ENCODE measurements at regions of chr3 and their contacts with region 1.

Region 1: GRCh38 chr3:56453011-56453410 is 15.3 kb downstream of the ERC2 start:
- DNase-seq: no peak

Region 2: DNA sequence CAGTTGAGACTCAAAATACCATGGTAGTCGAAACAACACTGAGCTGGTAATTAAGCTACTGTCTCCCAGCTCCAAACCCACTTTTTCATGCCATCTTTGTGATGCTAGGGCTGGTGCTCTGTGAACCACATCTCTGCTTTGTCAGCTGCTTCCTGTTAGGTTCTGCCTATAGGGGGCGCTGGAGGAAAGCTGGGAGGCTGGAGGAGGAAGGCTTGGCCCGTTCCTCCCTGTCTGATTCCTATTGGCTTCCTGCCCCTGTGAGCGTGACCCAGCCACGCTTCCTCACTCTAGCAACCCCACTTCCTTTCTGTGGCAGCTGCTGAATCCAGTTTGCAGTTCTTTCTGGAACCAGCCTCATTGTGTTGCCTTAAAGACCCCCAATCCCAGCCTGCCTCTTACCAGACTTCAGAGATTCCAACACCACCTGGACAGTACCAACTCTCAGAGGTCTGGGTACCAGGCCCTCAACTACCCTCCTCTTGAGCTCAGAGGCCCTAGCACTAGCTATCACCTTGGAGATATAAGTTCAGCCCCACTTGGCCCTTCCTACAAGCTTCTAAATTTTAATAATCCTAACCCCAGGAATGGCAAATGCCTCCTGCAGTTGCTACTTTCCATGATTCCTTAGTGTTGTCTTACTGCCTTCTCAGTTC is 105.7 kb before region 1 on chr3:
- intact Hi-C with region 1: loop called (anchors 5 kb)
- DNase-seq: peak; percentile 23 to 94 (median 80)